ENCODE measurements at regions of chr14 and their contacts with region 1.

Region 1: GRCh38 chr14:59189786-59190771 is 1.6 kb downstream of the DAAM1 start:
- DNase-seq: peak; percentile 88
- H3K4me3 Mint-ChIP-seq: peak overlapping the region; percentile 86
- H3K27ac Mint-ChIP-seq: peak overlapping the region; percentile 73
- H3K4me1 Mint-ChIP-seq: peaks cover 26% of the 10 kb centered on the region
- H3K27me3 Mint-ChIP-seq: peaks cover 15% of the 10 kb centered on the region

Region 2: DNA sequence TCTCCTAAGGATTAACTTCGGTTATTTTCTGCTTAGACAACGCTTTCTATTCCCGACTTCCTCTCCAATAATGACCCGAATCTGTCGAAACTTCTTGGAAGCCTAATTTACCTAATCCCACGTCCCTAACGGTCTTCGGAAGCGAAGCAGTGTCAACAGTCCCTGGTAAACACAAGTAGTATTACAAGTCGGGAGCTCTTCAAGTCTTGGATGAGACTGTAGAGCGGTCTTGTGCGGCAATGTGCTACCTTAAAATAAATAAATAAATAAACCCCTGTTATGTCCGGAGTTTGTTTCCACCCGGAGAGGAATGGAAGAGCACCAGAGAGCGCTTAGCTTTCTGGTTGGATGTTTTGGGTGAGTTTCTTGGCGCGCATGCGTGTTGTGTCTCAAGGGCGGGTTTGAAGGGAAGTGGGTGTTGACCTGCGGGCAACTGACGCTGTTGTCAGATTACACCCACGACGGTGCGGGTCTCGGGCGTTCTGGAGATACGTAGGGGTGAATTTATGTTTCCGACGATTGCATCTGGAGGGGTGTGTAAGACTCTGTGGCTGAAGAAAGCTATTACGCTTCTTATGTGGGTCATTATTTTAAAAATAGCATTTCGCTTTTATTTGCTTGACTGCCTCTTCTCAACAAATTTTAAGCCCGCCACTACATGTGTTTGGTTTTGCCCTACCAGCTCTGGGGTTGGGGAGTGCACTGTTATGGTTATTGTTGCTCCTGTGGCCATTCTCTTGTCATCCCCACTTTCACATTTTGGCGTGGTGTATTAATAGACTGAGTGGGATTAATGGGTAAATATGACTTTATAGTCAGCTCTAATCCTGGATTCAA is 762.6 kb before region 1 on chr14 and contains the starts of genes KIAA0586 and TIMM9:
- CTCF ChIA-PET with region 1: no interaction called
- POLR2A ChIA-PET with region 1: interaction called, 10 read pairs
- DNase-seq: peak; percentile 97
- H3K4me3 Mint-ChIP-seq: peak within 1 kb of the TSS; percentile 93
- H3K27ac Mint-ChIP-seq: peak within 1 kb of the TSS; percentile 97
- H3K4me1 Mint-ChIP-seq: peaks cover 46% of the 10 kb centered on the region
- H3K27me3 Mint-ChIP-seq: no peaks in the 10 kb centered on the region
- total RNA-seq, gene KIAA0586: 31.7 to 34.6 TPM
- total RNA-seq, gene TIMM9: 37.5 to 40.3 TPM

Region 3: GRCh38 chr14:59275653-59276052 is 85.6 kb after region 1 on chr14:
- CTCF ChIA-PET with region 1: no interaction called
- POLR2A ChIA-PET with region 1: interaction called, 15 read pairs
- DNase-seq: no peak
- H3K4me3 Mint-ChIP-seq: no peak overlapping the region
- H3K27ac Mint-ChIP-seq: peak overlapping the region; percentile 68
- H3K4me1 Mint-ChIP-seq: peaks cover 36% of the 10 kb centered on the region
- H3K27me3 Mint-ChIP-seq: no peaks in the 10 kb centered on the region

Region 4: DNA sequence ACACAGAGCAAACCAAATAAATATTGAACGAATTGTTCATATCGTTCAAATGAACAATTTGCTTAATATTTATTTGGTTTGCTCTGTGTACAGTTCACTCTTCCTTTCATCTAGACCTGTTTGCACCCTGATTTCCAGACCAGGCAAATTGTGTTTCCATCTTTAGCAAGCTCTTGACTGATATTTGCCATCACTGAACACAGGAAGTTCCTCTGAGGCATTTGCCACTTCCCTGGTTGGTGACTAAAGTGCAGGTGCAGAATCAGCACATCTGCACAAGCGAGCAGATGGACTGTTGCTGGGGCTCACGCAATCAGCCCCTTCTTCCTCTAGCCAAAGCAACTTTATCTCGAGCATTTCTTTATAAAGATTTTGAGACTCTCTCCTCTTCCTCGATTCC is 111.3 kb after region 1 on chr14:
- CTCF ChIA-PET with region 1: no interaction called
- POLR2A ChIA-PET with region 1: interaction called, 10 read pairs
- DNase-seq: peak; percentile 58
- H3K4me3 Mint-ChIP-seq: no peak overlapping the region
- H3K27ac Mint-ChIP-seq: peak overlapping the region; percentile 18
- H3K4me1 Mint-ChIP-seq: peaks cover 44% of the 10 kb centered on the region
- H3K27me3 Mint-ChIP-seq: no peaks in the 10 kb centered on the region

Region 5: DNA sequence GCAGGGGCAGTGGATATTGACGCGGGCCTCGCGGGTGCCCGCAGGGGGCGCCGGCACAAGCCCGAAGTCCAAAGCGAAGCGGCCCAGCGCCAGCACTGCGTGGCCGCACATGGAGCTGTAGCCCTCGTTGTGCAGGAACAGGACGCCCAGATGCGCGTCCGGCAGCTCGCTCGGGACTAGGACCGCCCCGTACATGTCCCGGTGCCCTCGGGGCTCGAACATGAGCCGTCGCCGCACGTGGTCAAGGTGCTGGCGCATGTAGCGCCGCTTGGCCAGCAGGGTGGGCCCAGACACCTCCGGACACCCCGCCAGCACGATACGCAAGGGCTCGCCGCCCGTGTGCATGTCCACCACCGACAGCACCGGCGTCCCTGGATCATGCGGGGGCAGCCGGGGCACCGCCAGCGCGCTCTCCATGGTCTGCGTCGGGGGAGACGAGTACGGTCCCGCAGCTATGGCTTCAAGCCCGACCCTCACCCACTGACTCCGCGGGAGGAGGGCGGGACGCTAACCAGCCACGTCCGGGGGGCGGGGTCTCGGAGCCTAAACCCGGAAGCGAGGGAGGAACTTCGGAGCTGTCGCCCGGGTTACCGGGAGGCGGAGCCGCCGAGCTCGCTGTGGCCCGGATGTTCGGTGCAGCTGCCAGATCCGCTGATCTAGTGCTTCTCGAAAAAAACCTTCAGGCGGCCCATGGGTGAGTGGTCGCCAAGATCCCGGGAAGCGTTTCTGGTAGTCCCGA is 294.0 kb after region 1 on chr14 and contains the starts of genes JKAMP and L3HYPDH:
- CTCF ChIA-PET with region 1: no interaction called
- POLR2A ChIA-PET with region 1: interaction called, 19 read pairs
- DNase-seq: peak; percentile 97
- H3K4me3 Mint-ChIP-seq: peak within 1 kb of the TSS; percentile 94
- H3K27ac Mint-ChIP-seq: peak within 1 kb of the TSS; percentile 88
- H3K4me1 Mint-ChIP-seq: peaks cover 67% of the 10 kb centered on the region
- H3K27me3 Mint-ChIP-seq: no peaks in the 10 kb centered on the region
- total RNA-seq, gene JKAMP: 31.1 to 31.5 TPM
- total RNA-seq, gene L3HYPDH: 15.6 to 17.4 TPM